ENCODE measurements at regions of chr2 and their contacts with region 1.

Region 1: DNA sequence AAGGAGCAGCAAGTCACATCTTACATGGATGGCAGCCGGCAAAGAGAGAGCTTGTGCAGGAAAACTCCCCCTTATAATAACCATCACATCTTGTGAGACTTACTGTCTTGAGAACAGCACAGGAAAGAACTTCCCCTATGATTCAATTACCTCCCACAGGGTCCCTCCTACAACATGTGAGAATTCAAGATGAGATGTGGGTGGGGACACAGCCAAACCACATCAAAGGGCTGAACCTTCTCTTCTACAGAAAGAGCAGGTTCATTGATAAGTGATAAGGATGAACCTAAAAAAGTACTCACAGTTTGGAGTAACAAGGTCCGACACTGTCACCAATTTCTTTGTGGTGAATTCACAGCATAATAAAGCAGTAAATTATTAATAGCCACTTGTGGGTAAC is 422.2 kb upstream of the FSIP2 start:
- DNase-seq: no peak
- H3K4me3 ChIP-seq: no peak overlapping the region
- H3K4me3 Mint-ChIP-seq: peak overlapping the region; percentile 24
- H3K27ac Mint-ChIP-seq: no peak overlapping the region
- H3K4me1 ChIP-seq: peaks cover 30% of the 10 kb centered on the region
- H3K4me1 Mint-ChIP-seq: peaks cover 12% of the 10 kb centered on the region
- H3K27me3 ChIP-seq: no peaks in the 10 kb centered on the region
- H3K27me3 Mint-ChIP-seq: no peaks in the 10 kb centered on the region
- CTCF ChIP-seq: no peak

Region 2: DNA sequence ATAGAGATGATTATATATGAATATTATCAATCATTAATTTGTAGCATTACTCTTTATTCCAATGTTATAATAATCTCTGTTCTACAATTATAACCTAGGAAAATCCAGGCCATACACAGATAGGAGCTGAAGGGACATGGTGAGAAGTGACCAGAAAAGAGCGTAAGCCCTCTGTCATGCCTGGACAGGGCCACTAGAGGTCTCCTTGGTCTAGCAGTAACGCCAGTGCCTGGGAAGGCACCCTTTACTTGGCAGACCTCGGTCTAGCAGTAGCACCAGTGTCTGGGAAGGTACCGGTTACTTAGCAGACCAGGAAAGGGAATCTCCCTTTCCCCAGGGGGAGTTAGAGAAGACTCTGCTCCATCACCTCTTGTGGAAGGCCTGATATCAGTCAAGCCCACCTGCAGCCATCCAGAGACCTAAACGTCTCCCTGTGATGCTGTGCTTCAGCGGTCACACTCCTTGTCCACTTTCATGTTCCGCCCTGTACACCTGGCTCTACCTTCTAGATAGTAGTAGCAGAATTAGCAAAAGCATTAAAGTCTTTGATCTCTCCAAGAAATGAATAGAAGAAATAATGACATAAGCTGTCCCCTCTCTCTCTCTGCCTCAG is 25.2 kb before region 1 on chr2:
- CTCF ChIA-PET with region 1: no interaction called
- POLR2A ChIA-PET with region 1: no interaction called
- intact Hi-C with region 1: loop called (anchors 1 kb)
- DNase-seq: peak; percentile 72 to 79
- H3K4me3 ChIP-seq: no peak overlapping the region
- H3K4me3 Mint-ChIP-seq: no peak overlapping the region
- H3K27ac Mint-ChIP-seq: no peak overlapping the region
- H3K4me1 ChIP-seq: no peaks in the 10 kb centered on the region; the same call in 1 of the 2 replicates
- H3K4me1 Mint-ChIP-seq: peaks cover 5% of the 10 kb centered on the region
- H3K27me3 ChIP-seq: no peaks in the 10 kb centered on the region
- H3K27me3 Mint-ChIP-seq: no peaks in the 10 kb centered on the region
- CTCF ChIP-seq: peak; percentile 71 to 83

Region 3: GRCh38 chr2:185979546-185980071 is 663.2 kb after region 1 on chr2:
- CTCF ChIA-PET with region 1: no interaction called
- POLR2A ChIA-PET with region 1: no interaction called
- intact Hi-C with region 1: loop called (anchors 10 kb)
- DNase-seq: peak in 1 of 2 experiments; percentile 45
- H3K4me3 ChIP-seq: no peak overlapping the region
- H3K4me3 Mint-ChIP-seq: no peak overlapping the region
- H3K27ac Mint-ChIP-seq: no peak overlapping the region
- H3K4me1 ChIP-seq: 0 out of 2 replicates have a peak, but pooled peaks cover 4% of the 10 kb centered on the region
- H3K4me1 Mint-ChIP-seq: peaks cover 7% of the 10 kb centered on the region
- H3K27me3 ChIP-seq: no peaks in the 10 kb centered on the region
- H3K27me3 Mint-ChIP-seq: no peaks in the 10 kb centered on the region
- CTCF ChIP-seq: no peak

Region 4: GRCh38 chr2:186129767-186130581 is 813.6 kb after region 1 on chr2:
- CTCF ChIA-PET with region 1: no interaction called
- POLR2A ChIA-PET with region 1: no interaction called
- intact Hi-C with region 1: loop called (anchors 2 kb)
- DNase-seq: peak in 1 of 2 experiments; percentile 37
- H3K4me3 ChIP-seq: no peak overlapping the region
- H3K4me3 Mint-ChIP-seq: no peak overlapping the region
- H3K27ac Mint-ChIP-seq: peak overlapping the region; percentile 16
- H3K4me1 ChIP-seq: no peaks in the 10 kb centered on the region
- H3K4me1 Mint-ChIP-seq: peaks cover 9% of the 10 kb centered on the region
- H3K27me3 ChIP-seq: no peaks in the 10 kb centered on the region
- H3K27me3 Mint-ChIP-seq: no peaks in the 10 kb centered on the region
- CTCF ChIP-seq: no peak

Region 5: DNA sequence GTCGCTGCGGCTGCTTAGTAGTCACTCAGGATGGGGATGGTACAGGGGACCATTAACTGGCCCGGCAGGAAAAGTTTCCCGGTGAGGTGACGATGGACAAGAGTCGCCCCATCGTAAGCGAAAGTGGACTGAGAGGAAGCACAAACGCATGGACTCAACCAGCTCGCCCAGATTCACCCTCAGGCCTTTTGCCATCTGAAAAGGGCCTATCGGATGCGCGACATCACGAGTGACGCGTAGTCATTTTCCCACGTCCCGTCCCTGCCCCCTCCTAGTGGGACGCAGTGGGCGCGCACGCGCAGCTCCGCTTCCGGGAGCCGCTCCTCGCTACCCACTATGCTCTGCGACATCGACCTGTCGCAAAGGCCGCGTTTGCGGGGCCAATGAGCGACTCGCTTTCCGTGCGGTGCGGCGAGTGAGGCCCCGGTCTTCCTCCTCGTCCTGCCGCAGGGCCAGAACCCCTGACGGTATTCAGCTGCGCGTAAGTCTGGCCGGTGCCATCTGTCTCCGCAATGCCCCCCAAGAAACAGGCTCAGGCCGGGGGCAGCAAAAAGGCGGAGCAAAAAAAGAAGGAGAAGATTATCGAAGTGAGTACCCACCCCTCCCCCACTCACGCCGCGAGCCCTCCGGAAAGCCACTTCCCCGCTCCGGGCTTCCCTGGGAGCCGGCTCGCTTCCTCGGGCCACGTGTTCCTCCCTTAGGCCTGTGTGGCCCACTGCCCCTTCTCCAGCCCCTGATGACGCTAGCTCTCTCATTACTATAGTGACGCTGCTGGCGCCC is 1169.7 kb after region 1 on chr2 and contains the start of gene ZC3H15:
- CTCF ChIA-PET with region 1: no interaction called
- POLR2A ChIA-PET with region 1: no interaction called
- intact Hi-C with region 1: loop called (anchors 10 kb)
- DNase-seq: peak; percentile 97 to 98
- H3K4me3 ChIP-seq: peak within 1 kb of the TSS; percentile 86
- H3K4me3 Mint-ChIP-seq: peak within 1 kb of the TSS; percentile 96
- H3K27ac Mint-ChIP-seq: peak within 1 kb of the TSS; percentile 97
- H3K4me1 ChIP-seq: peaks cover 23% of the 10 kb centered on the region
- H3K4me1 Mint-ChIP-seq: peaks cover 27% of the 10 kb centered on the region
- H3K27me3 ChIP-seq: no peaks in the 10 kb centered on the region
- H3K27me3 Mint-ChIP-seq: no peaks in the 10 kb centered on the region
- CTCF ChIP-seq: no peak
- total RNA-seq, gene ZC3H15: 97.2 and 98.1 TPM in 2 replicates